ENCODE measurements at regions of chr18 and their contacts with region 1.

Region 1: DNA sequence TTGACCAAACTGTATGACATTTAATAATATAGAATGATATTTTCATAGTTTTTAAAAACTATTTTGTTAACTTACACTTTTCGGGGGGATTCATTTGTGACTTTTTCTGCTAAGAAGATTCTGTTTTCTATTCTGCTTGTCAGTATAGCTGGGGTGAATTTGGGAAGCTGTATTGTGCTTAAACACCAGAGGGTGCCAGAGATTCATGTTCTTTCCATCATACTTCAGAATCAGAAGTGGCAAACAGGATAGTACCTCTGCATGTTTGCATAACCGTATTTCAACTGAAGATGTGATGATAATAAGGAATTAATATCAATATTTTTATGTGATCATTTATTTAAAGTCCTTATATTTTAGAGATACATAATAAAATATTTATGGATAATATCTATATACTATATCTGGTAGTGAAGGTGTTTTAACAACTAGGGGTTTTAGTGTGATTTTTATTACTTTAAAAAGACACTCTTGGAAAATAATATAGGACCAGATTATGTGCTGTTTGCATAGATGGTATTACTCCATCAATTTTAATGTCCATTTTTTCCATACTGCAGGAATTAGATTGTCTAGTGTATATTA is 81.0 kb downstream of the TAF4B start:
- DNase-seq: no peak
- ATAC-seq: peak in 3 of 4 donors; percentile 60 to 70 (median 61)
- H3K4me3 ChIP-seq: no peak overlapping the region
- H3K27ac ChIP-seq: no peak overlapping the region
- H3K4me1 ChIP-seq: no peaks in the 10 kb centered on the region
- H3K27me3 ChIP-seq: no peaks in the 10 kb centered on the region
- CTCF ChIP-seq: peak; percentile 59

Region 2: GRCh38 chr18:26648509-26649192 is 341.4 kb after region 1 on chr18:
- intact Hi-C with region 1: loop called in 1 of 2 experiments (anchors 5 kb)
- DNase-seq: no peak
- ATAC-seq: no peak
- H3K4me3 ChIP-seq: no peak overlapping the region
- H3K27ac ChIP-seq: no peak overlapping the region
- H3K4me1 ChIP-seq: no peaks in the 10 kb centered on the region
- H3K27me3 ChIP-seq: peaks cover 0 to 33% (median 0%) of the 10 kb centered on the region in 3 donors
- CTCF ChIP-seq: no peak

Measured in psoas muscle (tissue), 8 donors.